B cell (primary cell): ENCODE measurements at regions of chr21 and their contacts with region 1.

Region 1: DNA sequence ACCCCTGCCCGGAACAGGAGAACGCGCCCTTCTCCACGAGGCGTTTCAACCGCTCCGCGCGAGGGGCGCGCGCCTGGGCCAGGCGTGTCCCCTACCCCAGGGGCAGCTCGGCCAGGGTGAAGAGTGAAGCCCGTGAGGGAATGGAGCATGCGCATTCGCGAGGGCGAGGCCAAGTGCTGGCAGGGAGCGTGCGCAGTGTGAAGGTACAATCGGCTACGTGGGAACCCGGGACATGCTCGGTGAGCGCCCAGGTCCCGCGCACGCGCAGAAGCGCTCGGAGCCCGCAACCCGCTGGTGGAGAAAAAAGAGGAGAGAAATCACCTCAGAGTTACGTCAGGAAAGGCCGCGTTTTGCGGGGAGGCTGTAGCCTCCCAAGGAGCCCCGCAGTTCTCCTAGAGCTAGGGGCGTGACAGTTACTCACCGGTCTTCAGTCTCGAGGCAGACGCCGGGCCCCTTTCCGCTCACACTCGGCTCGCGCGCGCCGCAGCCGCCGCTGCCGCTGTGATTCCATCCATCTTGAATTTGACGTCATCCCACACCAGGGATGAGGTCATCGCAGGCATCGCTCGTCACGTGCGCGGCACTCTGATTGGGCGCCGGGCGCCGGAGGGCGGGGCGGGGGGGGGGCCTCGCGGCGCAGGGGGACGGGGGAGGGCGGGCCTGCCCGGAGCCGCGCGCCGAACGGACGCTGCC is at the start of gene ZBTB21:
- DNase-seq: peak; percentile 99
- ATAC-seq: peak; percentile 78
- H3K4me3 ChIP-seq: peak within 1 kb of the TSS; percentile 48 to 90 (median 74)
- H3K4me3 Mint-ChIP-seq: peak within 1 kb of the TSS; percentile 98
- H3K27ac ChIP-seq: peak within 1 kb of the TSS; percentile 99
- H3K27ac Mint-ChIP-seq: peak within 1 kb of the TSS; percentile 100
- H3K4me1 ChIP-seq: peaks cover 3 to 6% of the 10 kb centered on the region in 2 donors
- H3K4me1 Mint-ChIP-seq: peaks cover 31% of the 10 kb centered on the region
- H3K27me3 ChIP-seq: no peaks in the 10 kb centered on the region
- H3K27me3 Mint-ChIP-seq: no peaks in the 10 kb centered on the region
- CTCF ChIP-seq: no peak
- total RNA-seq, gene ZBTB21: 39.0 and 40.1 TPM in 2 replicates

Region 2: DNA sequence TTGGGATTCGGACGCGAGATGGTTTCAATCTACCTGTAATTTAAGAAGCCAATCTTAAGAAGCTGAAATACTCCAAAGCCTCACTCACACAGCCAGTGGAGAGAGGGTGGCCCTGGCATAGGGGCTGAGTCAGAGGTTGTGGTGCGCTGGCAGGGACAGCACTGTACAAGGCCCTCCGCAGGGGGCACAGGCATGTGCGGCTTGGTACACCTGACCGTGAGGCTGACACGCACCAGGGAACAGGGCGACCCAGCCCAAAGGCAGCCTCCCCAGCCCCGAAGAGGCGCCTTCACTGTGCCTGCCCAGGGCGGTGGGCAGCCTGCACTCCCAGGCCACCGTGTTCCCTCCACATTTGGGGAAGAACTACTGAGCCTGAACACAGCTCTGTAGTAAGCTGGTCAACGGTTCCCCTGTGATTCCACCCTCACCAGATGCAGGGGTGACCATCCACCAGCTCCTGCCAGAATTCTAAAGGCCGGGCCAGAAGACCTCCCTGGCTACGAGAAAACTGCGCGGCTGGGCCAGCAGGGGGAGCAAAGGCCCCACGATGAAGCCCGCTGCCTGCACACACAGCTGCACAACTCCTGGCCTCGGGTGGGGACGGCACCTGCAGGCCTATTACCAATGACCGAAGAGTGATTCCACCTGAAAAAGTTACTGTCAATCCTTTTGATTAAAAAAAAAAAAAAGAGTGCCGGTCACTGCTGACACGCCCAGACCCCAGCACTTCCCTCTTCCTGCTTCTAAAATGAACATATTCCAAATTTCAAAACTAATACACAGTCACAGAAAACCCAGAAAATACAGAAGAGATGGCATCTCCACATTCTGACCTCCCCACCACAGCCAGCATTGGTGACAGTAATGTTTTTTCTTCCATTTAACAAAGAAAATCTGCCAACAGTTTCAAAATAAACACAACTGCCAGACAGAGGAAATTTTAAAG is 193.5 kb before region 1 on chr21:
- CTCF ChIA-PET with region 1: interaction called, 3 read pairs
- POLR2A ChIA-PET with region 1: interaction called, 3 read pairs
- intact Hi-C with region 1: loop called (anchors 5 kb)
- DNase-seq: peak; percentile 76
- ATAC-seq: peak; percentile 95
- H3K4me3 ChIP-seq: no peak overlapping the region
- H3K4me3 Mint-ChIP-seq: no peak overlapping the region
- H3K27ac ChIP-seq: no peak overlapping the region
- H3K27ac Mint-ChIP-seq: no peak overlapping the region
- H3K4me1 ChIP-seq: peaks cover 0 to 5% of the 10 kb centered on the region in 2 donors
- H3K4me1 Mint-ChIP-seq: peaks cover 8% of the 10 kb centered on the region
- H3K27me3 ChIP-seq: no peaks in the 10 kb centered on the region
- H3K27me3 Mint-ChIP-seq: no peaks in the 10 kb centered on the region
- CTCF ChIP-seq: peak; percentile 85

Region 3: DNA sequence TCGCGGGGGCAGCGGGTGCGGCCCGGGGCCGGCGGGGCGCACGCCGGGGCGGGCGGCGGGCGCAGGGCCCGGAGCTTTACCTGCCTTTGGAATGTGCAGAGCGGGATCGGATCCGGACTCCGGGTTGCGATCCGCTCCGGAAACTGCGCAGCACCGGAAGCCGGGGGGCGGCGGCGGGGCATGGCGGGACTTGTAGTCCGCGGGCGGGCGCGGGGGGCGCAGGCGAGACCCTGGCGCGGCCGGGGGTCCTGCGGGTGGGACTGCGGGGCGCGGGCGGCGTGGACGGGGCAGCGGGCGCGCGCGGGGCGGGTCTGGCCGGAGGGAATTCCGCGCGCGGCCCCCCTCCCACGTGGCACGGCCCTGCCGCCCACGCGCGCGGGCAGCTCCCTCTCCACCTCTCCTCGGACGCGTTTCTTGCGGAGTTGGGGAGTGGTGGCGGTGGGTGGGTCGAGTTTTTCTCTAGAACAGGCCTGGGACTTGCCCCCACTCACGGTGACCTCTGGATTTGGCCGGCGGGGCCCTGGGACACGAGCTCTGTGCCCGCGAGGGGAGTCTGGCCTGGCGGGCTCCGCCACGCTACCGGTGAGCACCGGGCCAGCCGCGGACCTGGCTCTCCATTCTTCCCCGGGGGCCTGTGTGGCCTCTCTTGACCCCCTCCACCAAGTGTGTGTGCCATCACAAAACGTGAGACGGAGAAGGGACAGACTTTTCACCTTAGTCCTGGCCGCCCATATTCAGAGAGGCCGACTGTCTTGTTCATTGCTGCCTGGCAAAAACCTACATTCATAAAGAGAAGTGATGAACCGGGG is 130.6 kb before region 1 on chr21 and contains the start of gene PRDM15:
- CTCF ChIA-PET with region 1: interaction called, 3 read pairs
- POLR2A ChIA-PET with region 1: interaction called, 3 read pairs
- intact Hi-C with region 1: loop called (anchors 2 kb)
- DNase-seq: peak; percentile 83
- ATAC-seq: peak; percentile 67
- H3K4me3 ChIP-seq: peak within 1 kb of the TSS; percentile 53 to 86 (median 81)
- H3K4me3 Mint-ChIP-seq: peak within 1 kb of the TSS; percentile 94
- H3K27ac ChIP-seq: peak within 1 kb of the TSS; percentile 76 to 80
- H3K27ac Mint-ChIP-seq: peak within 1 kb of the TSS; percentile 97
- H3K4me1 ChIP-seq: peaks cover 13 to 21% of the 10 kb centered on the region in 2 donors
- H3K4me1 Mint-ChIP-seq: peaks cover 35% of the 10 kb centered on the region
- H3K27me3 ChIP-seq: no peaks in the 10 kb centered on the region
- H3K27me3 Mint-ChIP-seq: no peaks in the 10 kb centered on the region
- CTCF ChIP-seq: no peak
- total RNA-seq, gene PRDM15: 20.7 and 21.3 TPM in 2 replicates

Region 4: GRCh38 chr21:41993744-41994143 is 16.2 kb before region 1 on chr21:
- CTCF ChIA-PET with region 1: no interaction called
- POLR2A ChIA-PET with region 1: no interaction called
- intact Hi-C with region 1: no loop called
- DNase-seq: no peak
- ATAC-seq: no peak
- H3K4me3 ChIP-seq: no peak overlapping the region
- H3K4me3 Mint-ChIP-seq: no peak overlapping the region
- H3K27ac ChIP-seq: no peak overlapping the region
- H3K27ac Mint-ChIP-seq: no peak overlapping the region
- H3K4me1 ChIP-seq: no peaks in the 10 kb centered on the region
- H3K4me1 Mint-ChIP-seq: no peaks in the 10 kb centered on the region
- H3K27me3 ChIP-seq: no peaks in the 10 kb centered on the region
- H3K27me3 Mint-ChIP-seq: no peaks in the 10 kb centered on the region
- CTCF ChIP-seq: no peak

Region 5: DNA sequence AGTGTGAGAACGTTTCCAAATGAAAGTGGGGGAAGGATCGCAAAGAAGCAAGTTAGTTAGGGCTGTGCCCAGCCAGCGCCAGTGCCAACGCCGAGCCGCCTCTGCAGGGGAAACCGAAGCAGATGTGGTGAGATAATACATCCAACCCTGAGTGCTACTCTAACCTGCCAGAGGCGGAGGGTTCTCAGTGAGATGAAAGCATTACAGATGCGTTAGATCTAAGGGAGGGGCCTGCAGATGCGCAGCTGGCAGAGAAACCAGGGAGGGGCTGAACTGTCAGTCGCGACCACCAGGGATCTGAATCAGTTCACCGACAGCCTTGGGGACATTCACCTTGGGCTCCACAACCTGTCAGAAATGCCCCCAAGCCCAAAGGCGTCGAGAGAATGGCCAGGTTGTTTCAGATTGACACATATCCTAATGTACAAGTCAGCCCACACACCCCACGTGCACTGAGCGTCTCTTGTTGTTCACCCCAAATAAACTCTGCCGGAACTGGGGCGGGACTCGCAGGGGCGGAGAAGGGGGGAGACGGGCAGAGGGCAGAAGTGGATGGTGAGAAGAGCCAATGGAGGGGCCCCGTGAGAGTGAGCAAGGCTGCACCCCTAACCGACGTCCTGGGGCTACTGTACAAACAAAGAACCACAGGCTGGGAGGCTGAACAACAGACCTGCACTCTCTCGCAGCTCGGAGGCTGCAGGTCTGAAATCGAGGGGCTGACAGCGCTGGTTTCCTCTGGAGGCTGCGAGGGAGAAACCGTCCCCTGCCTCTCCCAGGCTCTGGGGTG is 52.5 kb after region 1 on chr21:
- CTCF ChIA-PET with region 1: interaction called, 13 read pairs
- POLR2A ChIA-PET with region 1: interaction called, 25 read pairs
- intact Hi-C with region 1: loop called (anchors 1 kb)
- DNase-seq: peak; percentile 94
- ATAC-seq: peak; percentile 73
- H3K4me3 ChIP-seq: peak overlapping the region; percentile 3 to 79 (median 65)
- H3K4me3 Mint-ChIP-seq: peak overlapping the region; percentile 91
- H3K27ac ChIP-seq: peak overlapping the region; percentile 87 to 96
- H3K27ac Mint-ChIP-seq: peak overlapping the region; percentile 99
- H3K4me1 ChIP-seq: peaks cover 64 to 95% of the 10 kb centered on the region in 2 donors
- H3K4me1 Mint-ChIP-seq: peaks cover 82% of the 10 kb centered on the region
- H3K27me3 ChIP-seq: no peaks in the 10 kb centered on the region
- H3K27me3 Mint-ChIP-seq: no peaks in the 10 kb centered on the region
- CTCF ChIP-seq: no peak

Region 6: DNA sequence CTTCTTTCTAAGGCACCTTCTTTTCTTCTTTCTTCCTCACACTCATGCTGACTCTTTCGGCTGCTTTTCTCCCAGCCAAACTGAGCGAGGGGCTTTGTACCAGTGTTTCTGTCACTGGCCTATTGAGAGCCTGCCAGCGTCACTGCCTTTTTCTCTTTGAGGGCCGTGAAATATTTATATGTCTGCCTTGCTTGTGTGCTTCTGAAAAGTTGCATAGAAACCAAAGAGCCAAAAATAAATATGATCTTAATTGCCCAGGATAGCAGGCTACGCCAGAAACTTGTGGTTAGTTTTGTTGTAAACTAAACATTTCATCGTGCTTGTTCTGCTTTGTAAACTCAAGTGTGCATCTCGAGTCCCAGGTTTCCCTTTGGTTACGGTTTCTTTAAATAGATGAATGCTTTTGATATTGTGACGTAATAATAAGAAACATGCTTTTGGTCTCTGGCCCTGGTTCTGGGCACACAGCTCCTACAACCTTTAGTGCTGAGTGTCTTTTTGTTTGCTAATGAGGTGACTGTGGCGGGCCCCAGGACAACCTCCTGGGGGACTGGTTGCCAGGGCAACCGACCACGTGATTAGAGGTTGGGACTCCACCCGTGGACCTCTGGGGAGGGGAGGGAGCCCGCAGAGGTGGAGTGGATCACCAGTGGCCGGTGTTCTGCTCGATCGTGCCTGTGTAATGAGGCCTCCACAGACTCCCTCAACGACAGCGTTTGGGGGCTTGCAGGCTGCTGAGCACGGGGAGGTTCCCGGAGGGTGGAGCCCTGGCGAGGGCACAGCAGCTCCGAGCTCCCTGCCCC is 514.6 kb after region 1 on chr21:
- CTCF ChIA-PET with region 1: no interaction called
- POLR2A ChIA-PET with region 1: no interaction called
- intact Hi-C with region 1: loop called (anchors 5 kb)
- DNase-seq: peak; percentile 96
- ATAC-seq: peak; percentile 85
- H3K4me3 ChIP-seq: peak overlapping the region in 4 of 5 experiments; percentile 29 to 65 (median 41)
- H3K4me3 Mint-ChIP-seq: peak overlapping the region; percentile 88
- H3K27ac ChIP-seq: peak overlapping the region; percentile 97 to 99
- H3K27ac Mint-ChIP-seq: peak overlapping the region; percentile 99
- H3K4me1 ChIP-seq: peaks cover 54 to 59% of the 10 kb centered on the region in 2 donors
- H3K4me1 Mint-ChIP-seq: peaks cover 78% of the 10 kb centered on the region
- H3K27me3 ChIP-seq: no peaks in the 10 kb centered on the region
- H3K27me3 Mint-ChIP-seq: no peaks in the 10 kb centered on the region
- CTCF ChIP-seq: no peak